CD4-positive, alpha-beta T cell (primary cell): ENCODE measurements at regions of chr18 and their contacts with region 1.

Region 1: DNA sequence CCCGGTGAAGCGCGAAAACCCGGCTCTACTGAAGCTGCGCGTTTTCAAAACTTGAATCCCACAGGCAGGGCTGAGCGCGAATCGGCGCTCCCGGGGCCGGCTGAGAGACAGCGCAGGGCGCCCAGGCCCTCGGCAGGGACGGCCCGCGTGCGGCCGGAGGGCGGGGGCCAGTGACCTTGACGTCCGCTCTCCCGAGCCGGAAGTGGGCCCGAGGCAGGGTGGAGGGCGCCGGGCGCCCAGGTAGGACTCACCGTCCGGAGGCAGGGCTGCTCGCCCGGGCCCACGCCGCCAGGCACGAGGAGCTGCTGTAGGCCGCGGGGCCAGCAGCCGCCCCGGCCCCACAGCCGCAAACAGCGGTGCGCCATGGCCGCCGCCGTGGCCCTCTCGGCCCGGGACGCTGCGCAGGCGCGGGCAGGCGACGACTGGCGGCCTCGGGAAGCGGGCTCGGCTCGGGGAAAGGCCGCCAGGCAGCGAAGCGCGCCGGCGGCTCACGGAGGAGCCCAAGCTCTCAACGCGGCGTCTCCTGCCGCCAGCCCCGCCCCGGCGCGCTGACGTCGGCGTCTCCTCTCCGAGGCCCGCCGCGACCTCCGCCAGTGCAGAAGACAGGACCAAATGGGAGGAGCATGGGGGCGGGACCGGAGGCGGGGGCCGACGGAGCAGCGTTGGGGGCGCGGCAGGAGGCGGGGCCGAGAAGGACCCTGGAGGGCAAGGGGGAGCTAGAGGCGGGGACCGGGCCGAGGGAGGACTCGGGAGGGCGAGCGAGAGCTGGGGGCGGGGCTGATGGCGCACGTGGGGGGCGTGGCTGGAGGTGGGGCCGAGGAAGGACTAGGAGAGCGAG is at the start of gene AFG3L2:
- DNase-seq: peak; percentile 99 to 100 (median 100)
- ATAC-seq: peak; percentile 87
- H3K4me3 ChIP-seq: peak within 1 kb of the TSS; percentile 87
- H3K4me3 Mint-ChIP-seq: peak within 1 kb of the TSS; percentile 91
- H3K27ac ChIP-seq: peak within 1 kb of the TSS; percentile 81 to 94
- H3K27ac Mint-ChIP-seq: peak within 1 kb of the TSS; percentile 85
- H3K4me1 ChIP-seq: peaks cover 40% of the 10 kb centered on the region
- H3K4me1 Mint-ChIP-seq: peaks cover 48% of the 10 kb centered on the region
- H3K27me3 ChIP-seq: no peaks in the 10 kb centered on the region
- H3K27me3 Mint-ChIP-seq: no peaks in the 10 kb centered on the region
- CTCF ChIP-seq: no peak
- total RNA-seq, gene AFG3L2: 40.4 to 46.8 TPM

Region 2: DNA sequence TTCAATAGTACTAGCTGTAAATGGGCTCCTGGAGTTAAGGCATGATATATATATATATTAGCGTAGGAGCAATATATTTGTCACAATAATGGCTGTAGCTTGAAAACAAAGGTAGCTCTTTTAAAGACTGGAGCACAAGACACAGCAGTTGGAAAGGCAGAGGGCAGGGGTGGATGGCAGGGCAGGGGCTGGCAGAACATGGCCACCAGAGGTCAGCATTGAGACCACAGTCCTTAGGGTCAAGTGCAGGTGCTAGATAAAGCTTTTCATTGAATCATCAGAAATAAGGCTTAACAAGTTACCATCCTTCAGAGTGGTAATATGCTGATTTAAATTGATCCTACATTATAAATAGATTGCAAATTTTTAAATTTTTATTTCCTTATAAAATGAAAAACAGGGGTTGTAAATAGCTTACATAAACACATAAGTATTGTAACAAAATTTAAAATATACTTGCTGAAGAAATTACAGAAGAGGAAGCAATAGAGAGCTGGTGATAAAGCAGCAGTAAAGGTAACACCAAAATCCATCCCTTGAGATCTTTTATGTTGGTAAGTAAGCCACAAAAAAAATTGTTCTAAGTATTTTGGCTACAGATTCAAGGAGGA is 1066.4 kb before region 1 on chr18:
- CTCF ChIA-PET with region 1: no interaction called
- POLR2A ChIA-PET with region 1: no interaction called
- intact Hi-C with region 1: no loop called
- DNase-seq: peak in 3 of 14 experiments; percentile 10 to 26 (median 22)
- ATAC-seq: no peak
- H3K4me3 ChIP-seq: no peak overlapping the region
- H3K4me3 Mint-ChIP-seq: no peak overlapping the region
- H3K27ac ChIP-seq: no peak overlapping the region
- H3K27ac Mint-ChIP-seq: no peak overlapping the region
- H3K4me1 ChIP-seq: no peaks in the 10 kb centered on the region
- H3K4me1 Mint-ChIP-seq: no peaks in the 10 kb centered on the region
- H3K27me3 ChIP-seq: no peaks in the 10 kb centered on the region
- H3K27me3 Mint-ChIP-seq: no peaks in the 10 kb centered on the region
- CTCF ChIP-seq: no peak

Region 3: GRCh38 chr18:11908182-11909060 is 468.5 kb before region 1 on chr18 and contains the start of gene MPPE1:
- CTCF ChIA-PET with region 1: no interaction called
- POLR2A ChIA-PET with region 1: no interaction called
- intact Hi-C with region 1: loop called in 1 of 2 experiments (anchors 10 kb)
- DNase-seq: peak; percentile 67 to 94 (median 82)
- ATAC-seq: peak; percentile 90
- H3K4me3 ChIP-seq: peak within 1 kb of the TSS; percentile 89
- H3K4me3 Mint-ChIP-seq: peak within 1 kb of the TSS; percentile 97
- H3K27ac ChIP-seq: peak within 1 kb of the TSS; percentile 89 to 94
- H3K27ac Mint-ChIP-seq: peak within 1 kb of the TSS; percentile 98
- H3K4me1 ChIP-seq: peaks cover 24% of the 10 kb centered on the region
- H3K4me1 Mint-ChIP-seq: peaks cover 31% of the 10 kb centered on the region
- H3K27me3 ChIP-seq: no peaks in the 10 kb centered on the region
- H3K27me3 Mint-ChIP-seq: no peaks in the 10 kb centered on the region
- CTCF ChIP-seq: no peak
- total RNA-seq, gene MPPE1: 62.6 to 68.3 TPM

Region 4: GRCh38 chr18:12408247-12408869 is 31.4 kb after region 1 on chr18:
- CTCF ChIA-PET with region 1: no interaction called
- POLR2A ChIA-PET with region 1: interaction called, 28 read pairs
- intact Hi-C with region 1: loop called in 1 of 2 experiments (anchors 2 kb)
- DNase-seq: peak in 2 of 14 experiments; percentile 9 to 20
- ATAC-seq: no peak
- H3K4me3 ChIP-seq: peak overlapping the region; percentile 56
- H3K4me3 Mint-ChIP-seq: peak overlapping the region; percentile 22
- H3K27ac ChIP-seq: no peak overlapping the region
- H3K27ac Mint-ChIP-seq: no peak overlapping the region
- H3K4me1 ChIP-seq: peaks cover 22% of the 10 kb centered on the region
- H3K4me1 Mint-ChIP-seq: peaks cover 25% of the 10 kb centered on the region
- H3K27me3 ChIP-seq: peaks cover 4 to 18% of the 10 kb centered on the region in 2 experiments
- H3K27me3 Mint-ChIP-seq: peaks cover 37% of the 10 kb centered on the region
- CTCF ChIP-seq: no peak

Region 5: GRCh38 chr18:12702221-12703095 is 325.5 kb after region 1 on chr18 and contains the starts of genes CEP76 and PSMG2:
- CTCF ChIA-PET with region 1: interaction called, 4 read pairs
- POLR2A ChIA-PET with region 1: interaction called, 40 read pairs
- intact Hi-C with region 1: loop called (anchors 1 to 2 kb)
- DNase-seq: peak; percentile 69 to 91 (median 80)
- ATAC-seq: peak; percentile 73
- H3K4me3 ChIP-seq: peak within 1 kb of the TSS; percentile 96
- H3K4me3 Mint-ChIP-seq: peak within 1 kb of the TSS; percentile 94
- H3K27ac ChIP-seq: peak within 1 kb of the TSS; percentile 88 to 95
- H3K27ac Mint-ChIP-seq: peak within 1 kb of the TSS; percentile 85
- H3K4me1 ChIP-seq: peaks cover 25% of the 10 kb centered on the region
- H3K4me1 Mint-ChIP-seq: peaks cover 53% of the 10 kb centered on the region
- H3K27me3 ChIP-seq: no peaks in the 10 kb centered on the region
- H3K27me3 Mint-ChIP-seq: no peaks in the 10 kb centered on the region
- CTCF ChIP-seq: no peak
- total RNA-seq, gene CEP76: 8.0 to 8.7 TPM
- total RNA-seq, gene PSMG2: 58.4 to 61.7 TPM

Region 6: DNA sequence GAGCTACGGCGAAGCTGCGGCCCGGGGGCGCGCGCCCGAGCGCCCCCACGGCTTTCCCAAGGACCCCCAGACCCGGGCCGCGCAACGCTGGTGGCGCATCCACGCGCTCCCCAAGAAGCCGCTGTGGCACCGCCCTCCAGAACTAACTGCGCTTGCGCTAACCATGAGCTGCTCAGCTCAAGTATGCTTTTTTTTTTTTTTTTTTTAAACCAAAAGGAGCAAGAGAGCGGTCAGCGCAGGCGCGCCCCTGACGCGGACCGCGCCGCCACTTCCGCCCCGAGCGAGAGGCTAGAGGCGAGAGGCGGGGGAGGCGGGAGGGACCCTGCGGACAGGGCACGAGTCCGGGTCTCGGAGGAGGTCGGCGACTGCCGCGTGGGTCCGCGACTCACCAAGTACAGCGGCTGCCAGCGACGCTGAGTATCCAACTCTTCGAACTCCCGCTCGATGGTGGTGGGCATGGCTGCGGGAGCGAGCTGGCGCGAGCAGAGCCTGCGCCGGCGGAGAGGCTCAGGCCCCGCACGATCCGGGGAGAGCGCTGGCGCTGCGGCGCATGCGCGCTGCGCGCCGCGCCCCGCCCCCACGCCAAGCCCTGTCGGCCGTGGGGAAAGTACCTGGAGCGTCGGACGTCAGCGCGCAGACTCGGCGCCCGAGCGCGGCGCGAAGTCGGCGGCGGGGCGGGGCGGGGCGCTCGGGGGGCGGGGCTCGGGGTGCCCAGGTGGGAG is 506.9 kb after region 1 on chr18 and contains the start of gene PTPN2:
- CTCF ChIA-PET with region 1: no interaction called
- POLR2A ChIA-PET with region 1: interaction called, 12 read pairs
- intact Hi-C with region 1: loop called in 1 of 2 experiments (anchors 2 kb)
- DNase-seq: peak; percentile 83 to 98 (median 90)
- ATAC-seq: peak; percentile 87
- H3K4me3 ChIP-seq: peak within 1 kb of the TSS; percentile 77
- H3K4me3 Mint-ChIP-seq: peak within 1 kb of the TSS; percentile 97
- H3K27ac ChIP-seq: peak within 1 kb of the TSS; percentile 99
- H3K27ac Mint-ChIP-seq: peak within 1 kb of the TSS; percentile 99
- H3K4me1 ChIP-seq: peaks cover 44% of the 10 kb centered on the region
- H3K4me1 Mint-ChIP-seq: peaks cover 64% of the 10 kb centered on the region
- H3K27me3 ChIP-seq: no peaks in the 10 kb centered on the region
- H3K27me3 Mint-ChIP-seq: no peaks in the 10 kb centered on the region
- CTCF ChIP-seq: no peak
- total RNA-seq, gene PTPN2: 49.4 to 53.8 TPM

Region 7: GRCh38 chr18:12990967-12991838 is 614.3 kb after region 1 on chr18 and contains the start of gene CEP192:
- CTCF ChIA-PET with region 1: no interaction called
- POLR2A ChIA-PET with region 1: interaction called, 18 read pairs
- intact Hi-C with region 1: loop called in 1 of 2 experiments (anchors 5 kb)
- DNase-seq: peak; percentile 94 to 99 (median 95)
- ATAC-seq: peak; percentile 97
- H3K4me3 ChIP-seq: peak within 1 kb of the TSS; percentile 85
- H3K4me3 Mint-ChIP-seq: no peak within 1 kb of the TSS
- H3K27ac ChIP-seq: peak within 1 kb of the TSS; percentile 61 to 84
- H3K27ac Mint-ChIP-seq: peak within 1 kb of the TSS; percentile 83
- H3K4me1 ChIP-seq: peaks cover 32% of the 10 kb centered on the region
- H3K4me1 Mint-ChIP-seq: peaks cover 21% of the 10 kb centered on the region
- H3K27me3 ChIP-seq: no peaks in the 10 kb centered on the region
- H3K27me3 Mint-ChIP-seq: no peaks in the 10 kb centered on the region
- CTCF ChIP-seq: no peak
- total RNA-seq, gene CEP192: 23.4 to 25.0 TPM

Region 8: DNA sequence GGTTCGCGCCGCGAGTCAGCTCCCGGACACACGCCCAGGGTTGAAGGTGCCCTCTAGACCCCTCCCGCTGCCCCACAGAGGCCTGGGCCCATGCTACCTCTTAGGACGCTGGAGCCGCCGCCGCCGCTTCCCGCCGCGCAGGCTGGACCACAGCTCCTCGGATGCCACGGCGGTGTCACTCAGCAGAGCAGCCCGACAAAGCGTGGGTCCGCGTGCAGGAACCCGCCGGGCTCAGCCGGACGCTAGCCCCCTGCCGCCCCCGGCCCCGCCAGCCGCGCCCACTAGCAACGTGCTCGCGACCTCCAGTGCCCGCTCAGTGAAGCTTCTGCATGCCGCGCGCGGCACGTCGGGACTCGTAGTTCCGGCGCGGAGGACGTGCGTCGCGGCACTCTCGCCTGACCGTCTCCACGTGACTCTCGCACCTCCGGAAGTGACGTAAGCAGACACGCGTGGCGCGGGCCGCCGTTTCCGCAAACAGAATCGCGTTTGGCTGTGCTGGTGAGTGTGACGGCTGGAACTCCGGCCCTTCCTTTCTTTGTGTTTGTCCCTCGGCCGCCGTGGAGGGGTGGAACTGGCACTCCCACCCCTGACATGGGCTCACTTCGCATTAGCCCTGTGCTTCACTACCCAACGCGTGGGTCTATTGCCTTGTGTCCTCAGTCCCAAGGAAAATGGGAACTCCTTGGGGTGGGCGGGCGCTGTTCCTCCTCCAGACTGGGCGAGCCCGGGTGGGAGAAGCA is 1349.5 kb after region 1 on chr18 and contains the starts of genes FAM210A and RNMT:
- CTCF ChIA-PET with region 1: no interaction called
- POLR2A ChIA-PET with region 1: interaction called, 4 read pairs
- intact Hi-C with region 1: loop called in 1 of 2 experiments (anchors 5 kb)
- DNase-seq: peak; percentile 85 to 98 (median 92)
- ATAC-seq: peak; percentile 92
- H3K4me3 ChIP-seq: peak within 1 kb of the TSS; percentile 89
- H3K4me3 Mint-ChIP-seq: peak within 1 kb of the TSS; percentile 89
- H3K27ac ChIP-seq: peak within 1 kb of the TSS; percentile 86 to 91
- H3K27ac Mint-ChIP-seq: peak within 1 kb of the TSS; percentile 84
- H3K4me1 ChIP-seq: peaks cover 33% of the 10 kb centered on the region
- H3K4me1 Mint-ChIP-seq: peaks cover 74% of the 10 kb centered on the region
- H3K27me3 ChIP-seq: no peaks in the 10 kb centered on the region
- H3K27me3 Mint-ChIP-seq: no peaks in the 10 kb centered on the region
- CTCF ChIP-seq: no peak
- total RNA-seq, gene FAM210A: 3.4 to 3.5 TPM
- total RNA-seq, gene RNMT: 128 to 130 TPM